CD8-positive, alpha-beta T cell (primary cell): ENCODE measurements at regions of chr17 and their contacts with region 1.

Region 1: DNA sequence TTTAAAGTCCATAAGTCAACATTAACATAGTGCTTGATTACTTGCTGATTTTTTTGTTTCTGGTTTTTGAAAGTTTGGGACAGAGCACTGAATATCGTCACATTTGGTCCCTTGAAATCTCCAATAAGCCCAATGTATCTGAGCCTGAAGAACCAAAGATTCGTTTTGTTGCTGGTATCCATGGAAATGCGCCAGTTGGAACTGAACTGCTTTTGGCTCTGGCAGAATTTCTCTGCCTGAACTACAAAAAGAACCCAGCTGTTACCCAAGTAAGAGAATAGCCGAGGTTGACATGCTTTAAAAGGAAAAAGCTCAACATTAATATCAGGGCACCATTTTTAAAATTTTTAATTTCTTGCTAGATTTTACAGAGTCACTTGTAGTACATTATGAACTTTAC is 27.7 kb upstream of the GOSR1 start:
- DNase-seq: no peak
- ATAC-seq: no peak
- H3K4me3 ChIP-seq: no peak overlapping the region
- H3K4me3 Mint-ChIP-seq: no peak overlapping the region
- H3K27ac ChIP-seq: no peak overlapping the region
- H3K27ac Mint-ChIP-seq: no peak overlapping the region
- H3K4me1 ChIP-seq: no peaks in the 10 kb centered on the region
- H3K4me1 Mint-ChIP-seq: peaks cover 2% of the 10 kb centered on the region
- H3K27me3 ChIP-seq: no peaks in the 10 kb centered on the region
- H3K27me3 Mint-ChIP-seq: no peaks in the 10 kb centered on the region
- CTCF ChIP-seq: no peak

Region 2: GRCh38 chr17:30309591-30309990 is 139.9 kb before region 1 on chr17:
- CTCF ChIA-PET with region 1: no interaction called
- POLR2A ChIA-PET with region 1: no interaction called
- intact Hi-C with region 1: no loop called
- DNase-seq: no peak
- ATAC-seq: no peak
- H3K4me3 ChIP-seq: no peak overlapping the region
- H3K4me3 Mint-ChIP-seq: no peak overlapping the region
- H3K27ac ChIP-seq: no peak overlapping the region
- H3K27ac Mint-ChIP-seq: no peak overlapping the region
- H3K4me1 ChIP-seq: no peaks in the 10 kb centered on the region
- H3K4me1 Mint-ChIP-seq: no peaks in the 10 kb centered on the region
- H3K27me3 ChIP-seq: no peaks in the 10 kb centered on the region
- H3K27me3 Mint-ChIP-seq: no peaks in the 10 kb centered on the region
- CTCF ChIP-seq: no peak

Region 3: GRCh38 chr17:30503558-30503957 is 54.1 kb after region 1 on chr17:
- CTCF ChIA-PET with region 1: no interaction called
- POLR2A ChIA-PET with region 1: no interaction called
- intact Hi-C with region 1: loop called in 1 of 2 experiments (anchors 10 kb)
- DNase-seq: no peak
- ATAC-seq: no peak
- H3K4me3 ChIP-seq: no peak overlapping the region
- H3K4me3 Mint-ChIP-seq: no peak overlapping the region
- H3K27ac ChIP-seq: no peak overlapping the region
- H3K27ac Mint-ChIP-seq: no peak overlapping the region
- H3K4me1 ChIP-seq: no peaks in the 10 kb centered on the region
- H3K4me1 Mint-ChIP-seq: peaks cover 28% of the 10 kb centered on the region
- H3K27me3 ChIP-seq: no peaks in the 10 kb centered on the region
- H3K27me3 Mint-ChIP-seq: no peaks in the 10 kb centered on the region
- CTCF ChIP-seq: no peak